ENCODE measurements at regions of chr10 and their contacts with region 1.

Region 1: GRCh38 chr10:35355971-35356724 is 19.8 kb downstream of the CCNY start:
- DNase-seq: peak; percentile 67
- ATAC-seq: peak; percentile 76
- H3K4me3 Mint-ChIP-seq: peak overlapping the region; percentile 71
- H3K27ac Mint-ChIP-seq: peak overlapping the region; percentile 94
- H3K4me1 Mint-ChIP-seq: peaks cover 78% of the 10 kb centered on the region
- H3K27me3 Mint-ChIP-seq: no peaks in the 10 kb centered on the region

Region 2: GRCh38 chr10:35328404-35329037 is 27.6 kb before region 1 on chr10:
- CTCF ChIA-PET with region 1: interaction called, 3 read pairs
- POLR2A ChIA-PET with region 1: no interaction called
- intact Hi-C with region 1: loop called in 1 of 2 experiments (anchors 1 kb)
- DNase-seq: no peak
- ATAC-seq: peak; percentile 82
- H3K4me3 Mint-ChIP-seq: no peak overlapping the region
- H3K27ac Mint-ChIP-seq: peak overlapping the region; percentile 28
- H3K4me1 Mint-ChIP-seq: peaks cover 54% of the 10 kb centered on the region
- H3K27me3 Mint-ChIP-seq: no peaks in the 10 kb centered on the region

Region 3: DNA sequence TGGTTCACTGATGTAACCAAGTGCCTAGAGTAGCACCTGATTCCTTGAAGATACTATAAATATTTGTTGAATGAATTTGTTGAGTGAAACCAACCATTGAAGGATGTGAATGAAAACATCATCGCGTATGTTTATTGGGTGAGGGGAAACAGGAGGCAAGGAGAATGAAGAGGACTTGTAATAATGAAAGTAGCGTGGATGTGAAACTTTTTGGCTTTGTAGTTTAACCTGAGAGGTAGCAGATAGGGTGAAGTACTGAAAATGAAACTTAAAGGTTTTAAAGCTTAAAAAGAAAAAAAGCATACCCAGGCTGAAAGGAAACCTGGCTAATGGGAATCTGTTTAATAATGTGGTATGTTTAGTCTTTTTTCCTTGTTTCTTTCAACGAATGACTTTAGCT is 14.6 kb before region 1 on chr10:
- CTCF ChIA-PET with region 1: interaction called, 9 read pairs
- POLR2A ChIA-PET with region 1: interaction called, 8 read pairs
- intact Hi-C with region 1: loop called (anchors 1 kb)
- DNase-seq: no peak
- ATAC-seq: peak; percentile 62
- H3K4me3 Mint-ChIP-seq: no peak overlapping the region
- H3K27ac Mint-ChIP-seq: peak overlapping the region; percentile 48
- H3K4me1 Mint-ChIP-seq: peaks cover 73% of the 10 kb centered on the region
- H3K27me3 Mint-ChIP-seq: no peaks in the 10 kb centered on the region

Region 4: DNA sequence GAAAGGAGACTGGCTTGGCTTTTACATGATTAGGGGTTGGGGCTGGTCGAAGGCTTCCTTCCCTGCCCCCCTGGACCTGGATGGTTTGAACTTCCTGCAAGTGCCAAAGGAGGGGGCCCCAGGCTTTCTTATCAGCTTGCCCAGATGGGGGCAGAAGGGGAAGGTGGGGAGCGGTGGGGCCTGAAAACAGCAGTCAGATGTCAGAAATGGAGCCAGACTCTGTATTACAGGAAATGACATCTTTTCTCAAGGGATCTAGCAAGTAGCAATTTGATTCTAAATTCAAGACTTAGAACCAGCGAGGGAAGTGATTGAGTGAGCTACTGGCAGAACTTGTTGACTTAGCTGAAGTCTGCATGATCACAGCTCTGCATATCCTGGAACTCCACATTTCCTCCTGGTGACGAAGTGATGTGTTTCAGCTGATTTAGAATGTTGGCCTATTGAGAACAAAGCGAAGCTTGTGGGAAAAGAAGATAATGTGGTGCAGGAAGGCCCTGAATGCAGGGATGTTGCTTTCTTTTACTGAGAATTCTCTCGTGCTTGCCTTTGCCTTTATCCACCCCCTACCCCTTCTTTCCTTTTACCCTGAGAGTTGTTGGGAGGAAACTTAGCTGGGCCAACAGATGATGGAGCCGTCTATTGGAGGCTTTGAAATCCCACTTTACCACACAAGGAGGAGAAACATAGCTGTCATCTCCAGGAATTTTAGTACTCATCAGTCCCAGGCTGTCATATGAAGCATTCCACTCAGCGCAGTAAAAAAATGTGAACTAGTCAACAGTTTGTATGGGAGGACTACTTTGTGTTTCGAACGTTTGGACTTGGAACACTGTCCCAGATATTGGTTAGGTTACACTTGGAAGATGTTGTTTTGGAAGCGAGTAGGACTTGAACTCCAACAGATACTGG is 23.3 kb after region 1 on chr10:
- CTCF ChIA-PET with region 1: interaction called, 3 read pairs
- POLR2A ChIA-PET with region 1: no interaction called
- intact Hi-C with region 1: loop called (anchors 2 kb)
- DNase-seq: peak; percentile 34
- ATAC-seq: peak; percentile 45
- H3K4me3 Mint-ChIP-seq: peak overlapping the region; percentile 28
- H3K27ac Mint-ChIP-seq: peak overlapping the region; percentile 88
- H3K4me1 Mint-ChIP-seq: peaks cover 66% of the 10 kb centered on the region
- H3K27me3 Mint-ChIP-seq: no peaks in the 10 kb centered on the region

Region 5: GRCh38 chr10:35433851-35434426 is 77.8 kb after region 1 on chr10:
- CTCF ChIA-PET with region 1: no interaction called
- POLR2A ChIA-PET with region 1: no interaction called
- intact Hi-C with region 1: loop called in 1 of 2 experiments (anchors 1 kb)
- DNase-seq: no peak
- ATAC-seq: peak; percentile 49
- H3K4me3 Mint-ChIP-seq: no peak overlapping the region
- H3K27ac Mint-ChIP-seq: no peak overlapping the region
- H3K4me1 Mint-ChIP-seq: peaks cover 31% of the 10 kb centered on the region
- H3K27me3 Mint-ChIP-seq: no peaks in the 10 kb centered on the region

Region 6: DNA sequence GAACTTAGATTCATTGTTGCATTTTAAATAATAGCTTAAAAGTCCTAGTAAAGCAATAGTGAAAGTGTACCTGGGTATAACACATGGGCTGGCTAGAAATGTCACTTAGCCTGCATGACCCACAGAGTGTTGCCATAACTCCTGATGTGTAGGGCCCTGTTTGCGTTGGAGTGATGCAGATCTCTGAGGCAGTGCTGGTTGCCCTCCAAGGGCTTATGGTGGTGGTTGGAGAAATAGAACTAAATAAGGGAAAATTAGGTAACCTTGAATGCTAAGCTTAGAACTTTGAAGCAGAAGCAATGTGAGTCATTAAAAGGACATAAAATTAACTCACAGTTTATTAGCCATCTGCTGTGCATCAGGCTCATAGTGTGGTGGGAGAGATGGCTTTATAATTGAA is 85.9 kb after region 1 on chr10:
- CTCF ChIA-PET with region 1: interaction called, 4 read pairs
- POLR2A ChIA-PET with region 1: no interaction called
- intact Hi-C with region 1: loop called (anchors 1 kb)
- DNase-seq: peak; percentile 37
- ATAC-seq: peak; percentile 66
- H3K4me3 Mint-ChIP-seq: peak overlapping the region; percentile 18
- H3K27ac Mint-ChIP-seq: peak overlapping the region; percentile 83
- H3K4me1 Mint-ChIP-seq: peaks cover 51% of the 10 kb centered on the region
- H3K27me3 Mint-ChIP-seq: no peaks in the 10 kb centered on the region